Mammary epithelial cell (primary cell): ENCODE measurements at regions of chr10 and their contacts with region 1.

Region 1: DNA sequence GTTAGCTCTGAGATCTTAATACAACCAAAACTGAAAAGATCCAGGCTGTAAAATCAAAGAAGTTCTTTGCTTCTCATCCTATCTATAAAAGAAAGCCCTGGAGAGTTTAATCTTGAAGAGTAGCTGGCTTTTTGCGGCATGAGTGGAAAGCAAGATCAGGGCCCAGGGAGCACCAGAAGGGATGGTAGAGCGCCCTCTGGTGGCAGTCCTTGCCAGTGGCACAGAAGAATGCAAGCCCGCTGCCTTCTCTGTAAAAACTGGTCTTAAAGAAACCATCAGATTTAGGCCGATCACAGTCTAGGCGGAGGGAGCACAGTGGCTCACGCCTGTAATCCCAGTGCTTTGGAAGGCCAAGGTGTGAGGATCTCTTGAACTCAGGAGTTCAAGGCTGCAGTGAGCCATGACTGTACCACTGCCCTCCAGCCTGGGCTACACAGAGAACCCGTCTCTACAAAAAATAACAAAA is 35.6 kb downstream of the CPN1 start:
- DNase-seq: peak; percentile 69
- H3K4me3 ChIP-seq: no peak overlapping the region
- H3K27ac ChIP-seq: no peak overlapping the region
- H3K4me1 ChIP-seq: peaks cover 29% of the 10 kb centered on the region
- H3K27me3 ChIP-seq: no peaks in the 10 kb centered on the region
- CTCF ChIP-seq: peak; percentile 95 to 96

Region 2: GRCh38 chr10:99906470-99906869 is 139.6 kb before region 1 on chr10:
- CTCF ChIA-PET with region 1: interaction called, 3 read pairs
- dilution Hi-C with region 1: no loop called
- in situ Hi-C with region 1: loop called in 1 of 2 experiments (anchors 5 kb)
- intact Hi-C with region 1: loop called (anchors 1 kb)
- DNase-seq: peak; percentile 96
- H3K4me3 ChIP-seq: no peak overlapping the region
- H3K27ac ChIP-seq: peak overlapping the region; percentile 79
- H3K4me1 ChIP-seq: peaks cover 28% of the 10 kb centered on the region
- H3K27me3 ChIP-seq: no peaks in the 10 kb centered on the region
- CTCF ChIP-seq: peak; percentile 55 to 66

Region 3: GRCh38 chr10:99913831-99914235 is 132.2 kb before region 1 on chr10:
- CTCF ChIA-PET with region 1: interaction called, 6 read pairs
- dilution Hi-C with region 1: no loop called
- in situ Hi-C with region 1: loop called in 1 of 2 experiments (anchors 5 kb)
- intact Hi-C with region 1: loop called (anchors 2 kb)
- DNase-seq: no peak
- H3K4me3 ChIP-seq: peak overlapping the region; percentile 3 to 40 (median 35)
- H3K27ac ChIP-seq: peak overlapping the region; percentile 27
- H3K4me1 ChIP-seq: peaks cover 23% of the 10 kb centered on the region
- H3K27me3 ChIP-seq: no peaks in the 10 kb centered on the region
- CTCF ChIP-seq: peak; percentile 19 to 58

Region 4: DNA sequence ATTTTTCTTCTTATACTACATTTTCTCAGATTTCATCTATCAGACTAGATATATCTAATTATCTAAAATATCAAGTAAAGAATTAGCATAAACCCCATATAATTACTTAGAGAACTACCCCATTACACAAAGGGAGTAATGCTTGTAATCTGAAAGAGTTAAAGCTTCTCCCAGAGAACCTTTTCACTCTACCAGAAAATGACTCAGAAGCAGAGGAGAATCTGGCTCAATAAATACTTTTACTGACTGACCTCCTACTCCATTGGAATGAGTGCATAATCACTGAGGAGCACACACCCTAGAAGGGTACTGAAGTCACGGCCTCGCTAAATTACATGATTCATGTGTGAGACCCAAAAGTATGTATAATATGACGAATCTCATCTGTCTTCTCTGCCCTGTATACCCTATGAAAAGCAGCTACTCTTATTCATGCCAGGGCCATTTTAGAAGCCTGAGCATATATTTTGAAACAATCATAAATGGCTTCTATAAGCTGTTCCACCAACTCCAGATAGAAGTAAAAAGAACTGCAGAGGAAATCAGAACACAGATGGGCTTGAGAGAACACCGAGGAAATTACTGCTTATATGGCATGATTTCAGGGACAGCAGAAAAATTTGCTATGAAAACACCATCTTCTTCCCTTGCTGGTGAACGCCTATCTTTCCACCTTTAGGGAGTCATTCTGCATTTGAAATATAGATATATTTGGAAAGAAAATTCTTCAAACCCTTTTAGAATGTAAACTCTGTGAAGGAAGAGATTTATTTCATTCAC is 69.0 kb before region 1 on chr10:
- CTCF ChIA-PET with region 1: no interaction called
- dilution Hi-C with region 1: no loop called
- in situ Hi-C with region 1: no loop called
- intact Hi-C with region 1: loop called (anchors 1 kb)
- DNase-seq: peak; percentile 96
- H3K4me3 ChIP-seq: peak overlapping the region in 1 of 3 experiments; percentile 25
- H3K27ac ChIP-seq: peak overlapping the region; percentile 95
- H3K4me1 ChIP-seq: peaks cover 32% of the 10 kb centered on the region
- H3K27me3 ChIP-seq: no peaks in the 10 kb centered on the region
- CTCF ChIP-seq: no peak

Region 5: GRCh38 chr10:100027416-100027815 is 18.6 kb before region 1 on chr10:
- CTCF ChIA-PET with region 1: no interaction called
- dilution Hi-C with region 1: no loop called
- in situ Hi-C with region 1: no loop called
- intact Hi-C with region 1: no loop called
- DNase-seq: no peak
- H3K4me3 ChIP-seq: no peak overlapping the region
- H3K27ac ChIP-seq: no peak overlapping the region
- H3K4me1 ChIP-seq: no peaks in the 10 kb centered on the region
- H3K27me3 ChIP-seq: no peaks in the 10 kb centered on the region
- CTCF ChIP-seq: no peak

Region 6: DNA sequence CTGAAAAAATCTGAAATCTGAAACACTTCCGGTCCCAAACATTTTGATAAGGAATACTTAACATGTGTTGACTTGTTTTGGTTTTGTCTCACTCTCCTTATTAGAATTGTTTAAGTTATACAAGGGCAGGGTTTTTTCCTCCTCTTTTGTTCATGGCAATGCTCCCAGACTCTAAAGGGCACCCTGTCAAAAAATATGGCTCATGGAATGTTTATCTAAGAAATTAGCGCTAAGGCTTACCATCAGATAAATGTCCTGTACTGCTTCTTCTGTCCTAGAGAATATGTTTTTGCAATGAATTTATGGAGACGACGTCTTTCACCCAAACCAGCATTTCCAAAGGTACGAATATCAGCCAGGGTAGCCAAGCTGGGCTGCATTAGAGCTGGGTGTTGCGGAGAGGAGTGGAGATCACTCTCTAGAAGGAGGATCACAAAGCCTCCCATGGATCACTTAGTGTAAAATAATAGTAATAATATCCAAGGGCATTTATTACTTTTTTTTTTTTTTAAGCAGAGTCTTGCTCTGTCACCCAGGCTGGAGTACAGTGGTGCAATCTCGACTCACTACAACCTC is 93.0 kb after region 1 on chr10:
- CTCF ChIA-PET with region 1: no interaction called
- dilution Hi-C with region 1: no loop called
- in situ Hi-C with region 1: no loop called
- intact Hi-C with region 1: no loop called
- DNase-seq: no peak
- H3K4me3 ChIP-seq: no peak overlapping the region
- H3K27ac ChIP-seq: no peak overlapping the region
- H3K4me1 ChIP-seq: no peaks in the 10 kb centered on the region
- H3K27me3 ChIP-seq: no peaks in the 10 kb centered on the region
- CTCF ChIP-seq: no peak